PC-9 (cell line): ENCODE measurements at regions of chr12 and their contacts with region 1.

Region 1: GRCh38 chr12:85951823-85952222 is 77.7 kb downstream of the NTS start:
- DNase-seq: no peak
- H3K4me3 ChIP-seq: no peak overlapping the region
- H3K27ac ChIP-seq: no peak overlapping the region
- H3K4me1 ChIP-seq: no peaks in the 10 kb centered on the region
- H3K27me3 ChIP-seq: no peaks in the 10 kb centered on the region
- CTCF ChIP-seq: peak; percentile 55

Region 2: DNA sequence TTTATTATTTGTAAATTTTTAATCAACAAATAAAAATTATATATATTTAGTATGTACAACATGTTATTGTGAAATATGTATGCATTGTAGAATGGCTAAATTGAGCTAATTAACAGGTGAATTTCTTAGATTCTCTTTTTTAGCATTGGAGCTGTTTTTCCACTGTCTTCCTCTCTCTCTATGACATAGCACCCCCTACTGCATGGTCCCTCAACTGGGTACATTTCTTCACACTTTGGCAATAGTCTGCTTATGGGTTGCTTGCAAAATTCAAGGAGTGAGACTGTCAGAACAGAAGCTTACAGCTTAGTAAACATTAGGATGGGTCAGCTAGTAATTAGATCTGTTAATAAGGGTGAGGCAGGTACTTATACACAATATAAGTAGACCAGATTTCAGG is 962.9 kb after region 1 on chr12:
- CTCF ChIA-PET with region 1: no interaction called
- POLR2A ChIA-PET with region 1: no interaction called
- intact Hi-C with region 1: loop called (anchors 1 kb)
- DNase-seq: peak; percentile 20 to 36
- H3K4me3 ChIP-seq: no peak overlapping the region
- H3K27ac ChIP-seq: no peak overlapping the region
- H3K4me1 ChIP-seq: no peaks in the 10 kb centered on the region
- H3K27me3 ChIP-seq: no peaks in the 10 kb centered on the region
- CTCF ChIP-seq: peak; percentile 72

Region 3: DNA sequence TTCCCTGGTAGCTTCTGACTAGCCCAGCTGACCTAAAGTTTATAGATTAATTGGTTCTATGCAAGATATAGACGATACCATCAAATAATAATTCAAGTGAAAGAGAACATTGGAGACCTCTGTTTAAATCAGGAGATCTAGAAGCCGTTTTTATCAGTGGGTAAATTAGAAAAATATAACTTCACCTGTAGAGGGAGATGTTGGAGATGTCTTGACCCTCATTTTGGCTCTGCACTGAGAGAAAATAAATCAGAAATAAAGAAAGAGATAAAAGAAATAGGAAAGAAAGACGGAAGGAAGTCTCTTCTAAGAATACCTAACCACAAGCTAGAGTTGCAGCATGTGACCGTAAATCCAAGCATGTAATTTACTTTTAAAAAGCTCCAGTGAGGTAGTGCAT is 1392.9 kb after region 1 on chr12:
- CTCF ChIA-PET with region 1: no interaction called
- POLR2A ChIA-PET with region 1: no interaction called
- intact Hi-C with region 1: loop called (anchors 10 kb)
- DNase-seq: no peak
- H3K4me3 ChIP-seq: no peak overlapping the region
- H3K27ac ChIP-seq: no peak overlapping the region
- H3K4me1 ChIP-seq: no peaks in the 10 kb centered on the region
- H3K27me3 ChIP-seq: no peaks in the 10 kb centered on the region
- CTCF ChIP-seq: peak; percentile 60

Region 4: GRCh38 chr12:87953256-87953860 is 2001.5 kb after region 1 on chr12:
- CTCF ChIA-PET with region 1: no interaction called
- POLR2A ChIA-PET with region 1: no interaction called
- intact Hi-C with region 1: loop called (anchors 1 kb)
- DNase-seq: peak in 1 of 2 experiments; percentile 5
- H3K4me3 ChIP-seq: no peak overlapping the region
- H3K27ac ChIP-seq: no peak overlapping the region
- H3K4me1 ChIP-seq: no peaks in the 10 kb centered on the region
- H3K27me3 ChIP-seq: no peaks in the 10 kb centered on the region
- CTCF ChIP-seq: peak; percentile 76